PC-3 (cell line): ENCODE measurements at regions of chr20 and their contacts with region 1.

Region 1: DNA sequence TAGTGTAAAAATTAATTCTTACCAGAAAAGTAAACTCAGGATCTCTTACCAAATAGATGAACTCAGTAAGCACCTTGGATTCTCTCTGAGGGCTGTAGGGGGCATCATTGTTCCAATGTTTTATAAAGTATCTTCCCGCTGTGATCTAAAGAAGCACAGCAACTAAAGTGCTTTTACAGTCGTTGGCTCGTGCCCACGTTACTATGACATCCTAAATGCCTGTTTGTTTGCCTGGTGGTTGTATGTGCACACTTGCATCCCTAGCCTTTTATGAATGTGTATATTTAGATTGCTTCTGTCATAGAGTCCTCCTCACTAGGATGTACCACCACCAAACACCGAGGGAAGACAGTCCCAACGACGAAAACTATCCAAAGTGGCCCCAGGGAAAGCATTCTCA is 34.5 kb downstream of the SLX4IP start:
- DNase-seq: peak; percentile 87
- ATAC-seq: peak; percentile 79
- H3K4me3 ChIP-seq: no peak overlapping the region
- H3K27ac ChIP-seq: peak overlapping the region; percentile 23
- H3K4me1 ChIP-seq: peaks cover 18% of the 10 kb centered on the region
- H3K27me3 ChIP-seq: no peaks in the 10 kb centered on the region
- CTCF ChIP-seq: peak; percentile 80

Region 2: GRCh38 chr20:10636326-10636818 is 166.8 kb after region 1 on chr20:
- CTCF ChIA-PET with region 1: no interaction called
- POLR2A ChIA-PET with region 1: no interaction called
- intact Hi-C with region 1: loop called (anchors 1 kb)
- DNase-seq: peak; percentile 36
- ATAC-seq: peak; percentile 18
- H3K4me3 ChIP-seq: no peak overlapping the region
- H3K27ac ChIP-seq: peak overlapping the region; percentile 53
- H3K4me1 ChIP-seq: peaks cover 7% of the 10 kb centered on the region; the same call in 1 of the 2 replicates
- H3K27me3 ChIP-seq: no peaks in the 10 kb centered on the region
- CTCF ChIP-seq: peak; percentile 19; the same call in 1 of the 2 replicates

Region 3: DNA sequence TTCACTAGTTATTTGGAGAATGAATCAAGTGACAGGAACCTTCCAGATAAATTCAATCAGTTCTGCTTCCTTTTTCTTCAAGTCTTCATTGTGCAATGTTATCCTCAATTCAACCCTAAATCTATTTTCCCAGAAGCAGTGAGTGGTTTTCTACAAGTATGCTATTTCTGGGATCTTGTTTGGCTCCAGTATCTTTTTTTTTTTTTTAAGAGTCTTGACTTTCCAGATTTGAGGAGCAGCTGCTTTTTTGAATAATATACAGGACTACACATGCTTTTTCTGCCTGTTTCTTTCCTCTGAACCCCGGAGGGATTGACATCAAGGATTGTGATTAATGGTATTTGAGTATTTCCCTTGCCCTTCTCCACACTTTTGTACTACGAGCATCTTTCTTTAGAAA is 543.4 kb after region 1 on chr20:
- CTCF ChIA-PET with region 1: no interaction called
- POLR2A ChIA-PET with region 1: no interaction called
- intact Hi-C with region 1: no loop called
- DNase-seq: no peak
- ATAC-seq: no peak
- H3K4me3 ChIP-seq: no peak overlapping the region
- H3K27ac ChIP-seq: no peak overlapping the region
- H3K4me1 ChIP-seq: no peaks in the 10 kb centered on the region
- H3K27me3 ChIP-seq: no peaks in the 10 kb centered on the region
- CTCF ChIP-seq: no peak